ENCODE measurements at regions of chr9 and their contacts with region 1.

Region 1: GRCh38 chr9:26892251-26893029 is at the start of gene CAAP1:
- DNase-seq: peak; percentile 96 to 98 (median 98)
- ATAC-seq: peak; percentile 99 to 100
- H3K4me3 ChIP-seq: peak within 1 kb of the TSS; percentile 78
- H3K27ac ChIP-seq: peak within 1 kb of the TSS; percentile 94
- H3K4me1 ChIP-seq: peaks cover 2% of the 10 kb centered on the region
- H3K27me3 ChIP-seq: no peaks in the 10 kb centered on the region
- total RNA-seq, gene CAAP1: 12.2 to 14.3 (median 13.5) TPM

Region 2: DNA sequence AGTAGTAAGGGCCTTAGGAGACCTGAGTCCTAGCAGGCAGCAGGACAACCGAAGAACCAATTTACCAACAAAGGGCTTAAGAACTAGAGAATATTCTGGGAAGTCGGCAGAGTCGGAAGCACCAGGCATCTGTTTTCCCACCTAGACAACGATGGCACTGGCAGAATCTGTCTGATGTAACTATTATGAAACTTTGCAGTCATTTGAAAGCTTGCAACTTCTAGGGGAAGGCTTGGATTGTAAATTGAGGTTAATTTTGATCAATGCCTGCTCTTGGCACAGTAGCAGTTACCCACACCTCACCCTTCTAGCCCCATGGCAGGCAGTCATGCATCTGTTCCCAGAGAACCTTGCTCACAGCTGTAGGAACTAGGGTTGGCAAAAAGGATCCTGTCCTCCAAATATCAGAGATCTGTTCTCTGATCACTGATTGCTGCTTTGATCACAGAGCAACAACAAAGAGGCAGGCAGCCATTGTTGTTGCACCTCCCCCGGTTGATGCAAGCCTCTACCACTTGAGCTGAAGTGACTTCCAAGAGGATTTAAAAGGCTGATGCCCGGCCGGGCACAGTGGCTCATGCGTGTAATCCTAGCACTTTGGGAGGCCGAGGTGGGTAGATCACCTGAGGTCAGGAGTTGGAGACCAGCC is 44.0 kb after region 1 on chr9:
- intact Hi-C with region 1: loop called in 2 of 4 experiments (anchors 2 to 10 kb)
- DNase-seq: no peak
- ATAC-seq: no peak
- H3K4me3 ChIP-seq: no peak overlapping the region
- H3K27ac ChIP-seq: no peak overlapping the region
- H3K4me1 ChIP-seq: peaks cover 3% of the 10 kb centered on the region
- H3K27me3 ChIP-seq: no peaks in the 10 kb centered on the region

Region 3: DNA sequence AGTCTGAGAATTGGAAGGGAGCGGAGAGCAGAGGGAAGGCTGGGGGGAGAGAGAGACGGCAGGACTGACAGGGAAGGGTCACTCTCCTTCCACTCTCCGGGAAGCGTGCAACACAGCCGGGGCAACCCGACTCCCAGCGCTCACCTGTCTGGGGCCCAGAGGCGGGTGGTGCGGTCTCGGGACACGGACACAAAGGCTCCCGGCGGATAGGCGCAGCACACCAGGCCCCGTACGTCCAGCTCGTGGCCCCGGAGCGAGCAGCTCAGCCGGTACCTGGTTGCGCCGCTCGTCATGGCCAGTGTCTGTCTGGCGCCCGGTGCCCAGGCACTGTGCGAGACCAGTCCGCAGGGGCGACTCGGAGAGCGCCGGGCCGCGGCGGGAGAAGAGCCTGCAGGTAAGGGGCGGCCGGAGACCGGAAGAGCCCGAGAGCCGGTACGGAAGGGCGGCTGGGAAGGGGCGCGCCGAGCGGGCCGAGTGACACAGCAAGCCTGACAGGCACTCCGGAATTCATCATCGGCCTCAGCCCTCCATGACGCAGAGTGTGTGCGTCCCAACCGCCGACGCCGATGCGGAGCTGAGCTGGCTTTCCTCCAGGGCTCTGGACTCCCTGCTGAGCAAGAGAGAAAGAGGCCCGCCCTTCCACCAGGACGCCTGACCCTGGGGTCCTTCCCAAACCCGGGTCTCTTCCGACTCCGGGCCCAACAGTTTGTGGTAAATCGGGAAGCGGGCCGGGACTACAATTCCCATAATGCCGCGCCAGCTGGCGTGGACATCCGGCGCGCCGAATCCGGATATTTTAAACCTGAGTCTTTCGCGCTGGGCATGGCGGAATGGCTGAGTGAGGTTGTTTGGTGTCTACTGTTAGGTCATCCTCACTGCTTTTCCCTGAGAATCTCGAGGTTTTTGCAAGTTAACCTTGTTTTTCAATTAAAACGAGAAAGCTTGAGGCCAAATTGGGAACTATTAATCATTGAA is 54.6 kb after region 1 on chr9 and contains the start of gene PLAA:
- intact Hi-C with region 1: loop called in 2 of 4 experiments (anchors 5 to 10 kb)
- DNase-seq: peak; percentile 91 to 95 (median 95)
- ATAC-seq: peak; percentile 100
- H3K4me3 ChIP-seq: peak within 1 kb of the TSS; percentile 63
- H3K27ac ChIP-seq: peak within 1 kb of the TSS; percentile 96
- H3K4me1 ChIP-seq: peaks cover 3% of the 10 kb centered on the region
- H3K27me3 ChIP-seq: no peaks in the 10 kb centered on the region
- total RNA-seq, gene PLAA: 26.4 to 31.8 (median 28.7) TPM

Measured in right cardiac atrium (tissue), 5 donors.